ENCODE measurements at regions of chrX and their contacts with region 1.

Region 1: GRCh38 chrX:153609917-153610428 is 11.0 kb upstream of the CCNQ start:
- DNase-seq: peak; percentile 87
- ATAC-seq: peak; percentile 94
- H3K4me3 Mint-ChIP-seq: peak overlapping the region; percentile 64
- H3K27ac Mint-ChIP-seq: no peak overlapping the region
- H3K4me1 Mint-ChIP-seq: no peaks in the 10 kb centered on the region
- H3K27me3 Mint-ChIP-seq: peaks cover 52% of the 10 kb centered on the region
- CTCF ChIP-seq: peak; percentile 59

Region 2: GRCh38 chrX:153599192-153600031 is 10.6 kb before region 1 on chrX:
- CTCF ChIA-PET with region 1: interaction called, 16 read pairs
- POLR2A ChIA-PET with region 1: no interaction called
- DNase-seq: peak; percentile 77
- ATAC-seq: peak; percentile 92
- H3K4me3 Mint-ChIP-seq: peak overlapping the region; percentile 69
- H3K27ac Mint-ChIP-seq: no peak overlapping the region
- H3K4me1 Mint-ChIP-seq: peaks cover 13% of the 10 kb centered on the region
- H3K27me3 Mint-ChIP-seq: peaks cover 4% of the 10 kb centered on the region
- CTCF ChIP-seq: no peak

Region 3: DNA sequence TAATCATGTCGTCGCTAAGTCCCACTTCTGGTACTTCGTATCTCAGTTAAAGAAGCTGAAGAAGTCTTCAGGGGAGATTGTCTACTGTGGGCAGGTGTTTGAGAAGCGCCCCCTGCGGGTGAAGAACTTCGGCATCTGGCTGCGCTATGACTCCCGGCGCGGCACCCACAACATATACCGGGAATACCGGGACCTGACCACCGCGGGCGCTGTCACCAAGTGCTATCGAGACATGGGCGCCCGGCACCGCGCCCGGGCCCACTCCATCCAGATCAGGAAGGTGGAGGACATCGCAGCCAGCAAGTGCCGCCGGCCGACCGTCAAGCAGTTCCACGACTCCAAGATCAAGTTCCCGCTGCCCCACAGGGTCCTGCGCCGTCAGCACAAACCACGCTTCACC is 52.3 kb after region 1 on chrX:
- CTCF ChIA-PET with region 1: interaction called, 58 read pairs
- POLR2A ChIA-PET with region 1: no interaction called
- DNase-seq: peak; percentile 75
- ATAC-seq: peak; percentile 81
- H3K4me3 Mint-ChIP-seq: peak overlapping the region; percentile 50
- H3K27ac Mint-ChIP-seq: no peak overlapping the region
- H3K4me1 Mint-ChIP-seq: no peaks in the 10 kb centered on the region; the same call in 1 of the 2 replicates
- H3K27me3 Mint-ChIP-seq: peaks cover 48% of the 10 kb centered on the region
- CTCF ChIP-seq: peak; percentile 30

Measured in WTC11 (cell line).